ENCODE measurements at regions of chrX and their contacts with region 1.

Region 1: GRCh38 chrX:130039847-130040246 is 57.4 kb downstream of the BCORL1 start:
- DNase-seq: no peak
- ATAC-seq: no peak
- H3K4me3 Mint-ChIP-seq: no peak overlapping the region
- H3K27ac Mint-ChIP-seq: no peak overlapping the region
- H3K4me1 Mint-ChIP-seq: no peaks in the 10 kb centered on the region
- H3K27me3 Mint-ChIP-seq: no peaks in the 10 kb centered on the region
- CTCF ChIP-seq: no peak

Region 2: DNA sequence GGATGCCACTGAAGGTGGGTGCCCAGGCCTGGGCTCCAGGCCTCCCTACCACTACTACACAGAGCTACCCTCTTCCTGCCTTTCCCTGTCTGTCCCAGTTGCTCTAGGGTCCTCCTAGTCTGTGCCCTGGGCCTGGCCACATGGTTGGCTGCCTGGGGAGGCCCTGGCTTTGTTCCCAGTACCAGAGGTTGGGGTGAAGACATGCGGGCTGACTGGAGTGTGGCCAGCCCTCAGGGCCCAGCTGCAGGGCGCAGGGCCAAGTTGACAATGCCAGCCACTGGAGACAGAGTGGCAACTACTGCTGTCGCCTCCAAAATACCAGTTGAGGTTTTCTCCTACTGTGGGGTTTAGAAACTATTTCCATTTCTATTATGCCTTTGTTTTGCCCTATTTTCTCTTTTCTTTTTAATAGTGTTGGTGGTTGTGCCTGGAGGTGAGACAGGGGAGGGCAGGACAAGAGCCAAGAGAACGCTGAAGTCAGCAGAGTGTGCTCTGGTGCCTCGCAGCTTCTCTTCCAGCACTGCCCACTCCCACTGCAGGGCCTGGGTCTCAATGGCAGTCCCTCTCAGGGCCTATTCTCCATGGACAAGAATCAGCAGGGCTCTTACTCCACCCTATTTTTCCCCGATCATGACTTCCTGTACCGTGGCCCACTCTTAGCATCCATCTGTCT is 333.3 kb before region 1 on chrX:
- CTCF ChIA-PET with region 1: no interaction called
- POLR2A ChIA-PET with region 1: no interaction called
- intact Hi-C with region 1: no loop called
- DNase-seq: no peak
- ATAC-seq: no peak
- H3K4me3 Mint-ChIP-seq: no peak overlapping the region
- H3K27ac Mint-ChIP-seq: no peak overlapping the region
- H3K4me1 Mint-ChIP-seq: no peaks in the 10 kb centered on the region
- H3K27me3 Mint-ChIP-seq: peaks cover 2% of the 10 kb centered on the region
- CTCF ChIP-seq: no peak

Region 3: DNA sequence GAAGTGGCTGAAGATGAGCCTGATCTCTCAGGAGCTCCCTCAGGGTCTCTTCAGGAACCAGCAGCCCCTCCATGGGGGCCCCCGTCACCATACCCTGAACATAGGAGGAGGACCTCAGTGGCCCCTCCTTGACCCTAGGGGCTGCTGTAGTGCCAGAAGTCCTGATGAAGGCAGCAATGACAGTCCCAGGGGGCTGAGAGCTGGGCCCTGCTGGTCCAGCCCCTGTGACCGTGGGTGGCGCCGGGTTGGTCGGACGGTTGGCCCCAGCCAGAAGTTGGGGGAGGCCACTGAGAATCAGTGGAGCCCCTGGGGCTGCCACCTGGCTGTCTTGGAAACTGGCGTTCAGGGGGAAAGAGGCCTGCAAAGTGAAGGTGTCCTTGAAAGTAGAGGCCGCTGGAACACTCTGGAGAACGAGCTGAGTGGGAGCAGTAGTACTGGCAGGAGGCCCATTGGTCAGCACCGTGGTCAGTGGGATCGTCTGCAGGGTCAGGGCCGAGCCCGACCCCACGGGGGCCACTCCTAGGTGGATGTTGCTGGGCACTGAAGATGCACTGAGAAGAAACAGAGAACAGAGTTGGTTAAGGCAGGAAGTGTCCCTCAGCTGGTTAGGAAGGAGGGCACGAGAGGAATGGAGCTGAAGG is 27.2 kb after region 1 on chrX:
- CTCF ChIA-PET with region 1: no interaction called
- POLR2A ChIA-PET with region 1: no interaction called
- intact Hi-C with region 1: no loop called
- DNase-seq: no peak
- ATAC-seq: no peak
- H3K4me3 Mint-ChIP-seq: no peak overlapping the region
- H3K27ac Mint-ChIP-seq: no peak overlapping the region
- H3K4me1 Mint-ChIP-seq: no peaks in the 10 kb centered on the region
- H3K27me3 Mint-ChIP-seq: no peaks in the 10 kb centered on the region
- CTCF ChIP-seq: no peak

Region 4: DNA sequence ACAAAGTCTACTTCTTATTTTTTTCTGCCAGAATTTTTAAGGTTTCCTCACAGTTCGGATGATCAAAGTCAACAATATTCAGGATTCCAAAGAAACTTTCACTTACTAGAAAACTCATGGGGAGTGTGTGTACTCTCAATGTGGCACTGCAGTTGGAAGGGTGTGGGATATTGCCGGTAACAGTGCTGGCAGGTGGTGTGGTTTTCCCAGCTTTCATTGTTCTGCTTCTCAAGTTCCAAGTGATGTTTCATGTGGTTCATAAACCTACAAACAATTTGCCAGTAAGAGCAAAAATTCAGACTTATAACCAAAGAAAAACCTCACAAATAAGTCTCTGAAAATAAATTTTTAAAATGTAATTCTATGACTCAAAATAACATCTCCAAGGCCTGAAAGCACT is 189.0 kb after region 1 on chrX:
- CTCF ChIA-PET with region 1: no interaction called
- POLR2A ChIA-PET with region 1: interaction called, 13 read pairs
- intact Hi-C with region 1: no loop called
- DNase-seq: no peak
- ATAC-seq: no peak
- H3K4me3 Mint-ChIP-seq: no peak overlapping the region
- H3K27ac Mint-ChIP-seq: no peak overlapping the region
- H3K4me1 Mint-ChIP-seq: no peaks in the 10 kb centered on the region
- H3K27me3 Mint-ChIP-seq: no peaks in the 10 kb centered on the region
- CTCF ChIP-seq: no peak

Measured in activated B cell treated with CpG ODN at 0.5 μM for 24 hours (primary cell).